Activated CD4-positive, alpha-beta memory T cell treated with anti-CD3 and anti-CD28 coated beads for 36 hours (primary cell): ENCODE measurements at regions of chr5 and their contacts with region 1.

Region 1: DNA sequence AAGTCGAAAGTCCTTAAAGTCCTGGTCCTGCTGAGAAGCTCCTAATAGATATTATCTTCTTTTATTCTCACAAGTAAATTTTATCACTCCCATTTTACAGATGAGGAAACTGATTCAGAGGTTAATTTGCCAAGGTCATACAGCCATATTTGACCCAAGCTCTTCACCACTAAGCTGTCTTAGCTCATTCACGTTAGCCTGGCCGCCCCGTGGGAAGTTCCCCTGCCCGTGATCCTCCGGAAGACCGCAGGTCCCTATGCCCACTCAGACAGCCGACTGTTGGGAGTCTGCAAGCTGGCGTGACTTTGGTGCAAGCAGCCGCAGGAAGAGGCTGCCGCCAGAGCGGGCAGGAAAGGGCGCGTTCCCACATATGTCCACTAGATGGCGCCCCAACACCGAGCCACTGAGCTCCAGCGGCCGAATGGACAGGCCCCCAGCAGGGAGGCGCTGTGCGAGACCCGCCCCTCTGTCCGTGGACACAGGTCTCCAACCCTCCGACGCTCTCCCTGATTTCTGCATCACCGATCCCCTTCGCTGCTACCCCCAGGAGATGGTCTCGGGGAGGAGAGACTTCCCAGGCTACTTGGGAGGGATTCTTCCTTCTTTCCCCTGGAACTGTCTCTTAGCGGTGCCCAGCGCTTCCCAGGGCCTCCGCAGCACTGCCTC is 10.0 kb upstream of the ARAP3 start:
- DNase-seq: peak; percentile 93
- H3K4me3 Mint-ChIP-seq: peak overlapping the region; percentile 46
- H3K27ac Mint-ChIP-seq: no peak overlapping the region
- H3K4me1 Mint-ChIP-seq: peaks cover 25% of the 10 kb centered on the region
- H3K27me3 Mint-ChIP-seq: no peaks in the 10 kb centered on the region

Region 2: DNA sequence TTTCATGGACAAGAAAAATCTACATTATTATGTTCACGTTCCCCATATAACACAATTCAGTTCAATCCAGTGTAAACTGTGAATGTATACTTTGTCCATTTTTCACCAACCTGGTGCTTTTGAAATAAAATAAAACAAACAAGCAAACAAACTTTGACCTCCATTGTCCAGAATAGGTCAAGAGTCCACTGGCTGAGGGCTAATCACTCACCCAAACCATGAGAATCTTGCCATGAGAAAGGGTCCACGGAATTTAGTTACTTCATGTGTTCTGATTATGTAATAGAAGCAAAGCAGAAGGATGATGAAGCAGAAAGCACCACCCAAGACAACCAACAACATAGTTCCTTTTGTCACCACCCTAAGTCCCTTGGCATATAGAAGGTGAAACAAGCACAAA is 101.9 kb before region 1 on chr5:
- CTCF ChIA-PET with region 1: interaction called, 13 read pairs
- POLR2A ChIA-PET with region 1: no interaction called
- intact Hi-C with region 1: loop called (anchors 5 kb)
- DNase-seq: no peak
- H3K4me3 Mint-ChIP-seq: no peak overlapping the region
- H3K27ac Mint-ChIP-seq: no peak overlapping the region
- H3K4me1 Mint-ChIP-seq: peaks cover 39% of the 10 kb centered on the region
- H3K27me3 Mint-ChIP-seq: no peaks in the 10 kb centered on the region

Region 3: DNA sequence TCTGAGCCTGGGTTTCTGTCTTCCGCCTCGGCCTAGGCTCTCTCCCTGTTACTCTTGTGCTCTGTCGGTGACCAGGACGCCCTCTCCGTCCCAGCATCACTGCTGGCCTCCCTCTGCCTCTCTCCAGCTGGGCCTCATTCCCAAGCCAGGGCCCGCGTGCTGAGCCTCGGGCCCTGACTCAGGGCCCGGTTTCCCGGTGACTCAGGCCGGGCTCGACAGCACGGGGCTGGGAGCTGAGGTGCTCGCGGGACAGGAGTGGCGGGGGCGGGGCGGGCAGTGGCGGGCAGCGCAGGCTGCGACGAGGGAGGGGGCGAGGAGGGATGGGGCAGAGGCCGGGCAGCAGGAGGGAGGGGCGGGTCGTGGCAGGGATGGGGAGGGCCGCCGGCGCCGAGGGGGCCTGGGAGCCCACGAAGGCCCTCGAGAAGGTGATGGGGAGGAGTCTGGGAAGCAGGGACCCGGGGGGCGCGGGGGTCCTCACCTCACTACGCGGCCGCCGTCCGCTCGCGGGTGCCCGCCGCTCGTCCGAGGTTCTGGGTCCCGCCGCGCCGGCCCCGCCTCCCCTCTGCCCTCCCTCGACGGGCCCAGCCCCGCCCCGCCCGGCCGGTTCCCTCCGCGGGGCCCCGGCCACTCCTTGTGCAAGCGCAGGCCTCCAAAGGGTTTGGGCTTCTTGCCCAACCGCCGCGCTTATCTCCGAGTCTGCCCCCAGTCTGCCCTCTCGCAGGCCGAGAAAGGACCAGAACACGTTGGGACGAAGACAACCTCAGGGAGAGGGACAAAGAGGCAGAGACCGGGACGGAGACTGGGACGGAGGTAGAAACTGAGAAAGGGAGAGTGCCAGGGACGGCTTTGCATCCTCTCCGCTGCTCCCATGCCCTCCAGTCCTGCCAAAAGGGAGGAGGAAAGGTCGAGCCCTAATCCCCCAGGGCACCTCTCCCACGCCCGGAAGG is 10.0 kb before region 1 on chr5 and contains the start of gene ARAP3:
- CTCF ChIA-PET with region 1: interaction called, 47 read pairs
- POLR2A ChIA-PET with region 1: interaction called, 3 read pairs
- intact Hi-C with region 1: no loop called
- DNase-seq: peak; percentile 53
- H3K4me3 Mint-ChIP-seq: peak within 1 kb of the TSS; percentile 69
- H3K27ac Mint-ChIP-seq: peak within 1 kb of the TSS; percentile 68
- H3K4me1 Mint-ChIP-seq: peaks cover 19% of the 10 kb centered on the region
- H3K27me3 Mint-ChIP-seq: no peaks in the 10 kb centered on the region
- total RNA-seq, gene ARAP3: 5.1 to 5.2 TPM

Region 4: DNA sequence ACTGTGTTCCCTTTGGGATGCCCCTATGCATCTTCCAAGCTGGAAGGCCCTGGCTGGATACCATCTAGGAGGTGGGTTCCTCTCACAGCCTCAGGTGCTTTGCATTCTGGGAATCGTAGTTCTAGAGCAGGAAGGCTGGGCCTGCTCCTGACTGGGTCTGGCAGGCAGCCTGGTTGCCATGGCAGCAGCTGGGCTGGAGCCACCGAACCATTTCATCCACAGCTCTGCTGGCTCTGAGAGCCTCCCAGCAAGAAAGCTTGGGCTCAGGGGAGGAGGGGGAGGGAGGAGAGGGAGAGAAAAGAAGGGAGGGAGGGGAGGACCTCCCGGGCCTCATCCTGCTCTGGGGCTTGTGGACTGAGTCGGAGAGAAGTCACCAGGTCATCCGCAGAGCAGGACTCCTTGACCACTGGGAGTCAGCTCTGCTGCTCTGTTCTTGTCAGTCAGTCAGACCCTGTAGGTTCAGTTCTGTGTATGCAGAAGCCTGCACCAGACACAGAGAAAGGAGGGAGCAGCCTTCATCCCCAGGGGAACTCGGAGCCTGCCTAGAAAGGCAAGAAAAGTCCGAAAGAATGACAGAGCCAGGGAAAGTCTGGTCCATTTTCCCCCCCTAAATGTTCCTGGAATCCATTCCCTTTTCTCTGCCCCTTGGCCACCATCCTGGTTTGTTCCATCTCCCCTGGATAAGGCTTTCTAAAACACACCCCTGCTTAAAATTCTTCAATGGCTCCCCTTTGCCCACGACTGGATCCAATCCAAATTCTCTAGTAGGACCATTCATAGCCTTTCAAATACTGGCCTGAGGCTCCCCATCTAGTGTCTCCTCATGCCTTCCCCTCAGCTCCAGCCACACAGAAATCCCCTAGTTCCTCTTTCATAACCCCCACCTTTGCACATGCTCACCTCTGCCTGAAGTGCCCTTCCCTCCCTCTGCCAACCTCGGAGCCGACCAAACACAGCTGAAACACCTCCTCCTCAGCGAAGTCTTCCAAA is 55.4 kb after region 1 on chr5:
- CTCF ChIA-PET with region 1: no interaction called
- POLR2A ChIA-PET with region 1: no interaction called
- intact Hi-C with region 1: no loop called
- DNase-seq: no peak
- H3K4me3 Mint-ChIP-seq: no peak overlapping the region
- H3K27ac Mint-ChIP-seq: no peak overlapping the region
- H3K4me1 Mint-ChIP-seq: no peaks in the 10 kb centered on the region
- H3K27me3 Mint-ChIP-seq: peaks cover 25% of the 10 kb centered on the region

Region 5: DNA sequence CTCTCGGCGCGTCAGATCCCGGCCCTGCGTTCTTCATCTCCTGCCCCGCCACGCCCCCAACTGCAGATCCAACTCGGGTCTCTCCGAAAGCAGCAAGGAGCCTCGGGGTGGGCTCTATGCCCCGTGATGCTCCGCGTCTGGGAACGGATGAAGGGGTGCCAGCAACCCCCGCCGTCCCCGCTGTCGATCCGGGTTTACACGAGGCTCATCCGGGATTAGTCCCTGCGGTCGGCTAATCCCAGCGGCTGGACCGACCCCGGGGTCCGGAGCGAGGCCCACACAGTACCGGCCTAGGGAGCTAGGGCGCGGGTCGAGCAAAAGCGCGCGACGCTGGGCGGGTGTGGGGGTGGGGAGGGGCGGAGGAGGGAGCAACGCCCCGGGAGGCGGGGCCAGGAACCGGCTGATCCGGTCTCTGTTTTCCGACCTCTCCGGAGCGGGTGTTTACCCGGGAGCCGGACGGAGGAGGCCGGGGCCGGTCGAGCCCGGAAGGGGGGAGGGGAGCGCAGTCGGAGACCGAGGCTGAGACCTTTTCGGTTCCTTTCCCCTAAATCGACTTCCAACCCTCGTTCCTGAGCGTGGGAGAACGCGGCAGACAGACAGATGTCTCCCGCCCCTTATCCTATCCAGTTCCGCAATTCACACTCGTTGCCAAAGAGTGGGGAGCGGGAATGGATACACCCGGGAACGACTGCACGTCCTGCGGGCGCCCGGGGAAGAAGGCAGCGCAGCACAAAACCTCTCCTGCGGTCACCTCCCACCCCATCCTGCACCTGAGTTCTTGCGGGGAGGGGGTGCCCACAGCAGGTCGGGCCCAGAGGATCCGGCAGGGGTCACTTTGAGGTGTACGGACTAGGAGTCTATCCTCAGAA is 157.6 kb after region 1 on chr5:
- CTCF ChIA-PET with region 1: interaction called, 15 read pairs
- POLR2A ChIA-PET with region 1: no interaction called
- intact Hi-C with region 1: no loop called
- DNase-seq: peak; percentile 84
- H3K4me3 Mint-ChIP-seq: peak overlapping the region; percentile 81
- H3K27ac Mint-ChIP-seq: peak overlapping the region; percentile 85
- H3K4me1 Mint-ChIP-seq: peaks cover 16% of the 10 kb centered on the region
- H3K27me3 Mint-ChIP-seq: no peaks in the 10 kb centered on the region

Region 6: GRCh38 chr5:141923448-141924352 is 231.7 kb after region 1 on chr5 and contains the start of gene DELE1:
- CTCF ChIA-PET with region 1: interaction called, 22 read pairs
- POLR2A ChIA-PET with region 1: interaction called, 6 read pairs
- intact Hi-C with region 1: loop called (anchors 1 kb)
- DNase-seq: peak; percentile 96
- H3K4me3 Mint-ChIP-seq: peak within 1 kb of the TSS; percentile 80
- H3K27ac Mint-ChIP-seq: peak within 1 kb of the TSS; percentile 96
- H3K4me1 Mint-ChIP-seq: peaks cover 18% of the 10 kb centered on the region
- H3K27me3 Mint-ChIP-seq: no peaks in the 10 kb centered on the region
- total RNA-seq, gene DELE1: 49.3 to 51.5 TPM

Region 7: DNA sequence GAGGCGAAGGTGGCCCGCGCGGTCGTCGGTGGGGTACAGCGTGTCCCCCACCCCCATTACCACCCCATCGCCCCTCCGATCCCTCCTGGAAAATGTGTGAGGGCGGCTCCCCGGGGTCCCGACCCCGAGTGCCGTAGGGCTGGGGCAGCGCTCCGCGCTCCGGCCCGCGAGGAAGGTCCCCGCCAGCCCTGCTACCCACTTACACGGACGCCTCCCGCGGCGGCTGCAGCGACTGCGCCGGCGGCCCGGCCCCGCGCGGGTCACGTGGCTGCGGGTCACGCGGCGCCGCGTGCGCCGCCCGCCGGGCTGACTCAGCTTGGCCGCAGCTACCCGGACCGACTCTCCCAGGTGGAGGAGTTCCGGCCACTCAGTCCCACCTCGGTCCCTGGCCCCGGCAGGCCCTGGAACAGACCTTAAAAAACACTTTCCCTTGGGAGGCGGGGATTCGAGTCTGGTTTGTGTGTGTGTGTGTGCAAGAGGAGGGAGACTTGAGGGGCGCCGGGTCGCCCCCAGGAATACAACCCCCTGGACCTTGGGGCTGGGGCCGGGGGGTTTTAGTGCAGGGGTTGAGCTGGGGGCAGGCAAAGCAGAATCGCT is 320.9 kb after region 1 on chr5 and contains the start of gene GNPDA1:
- CTCF ChIA-PET with region 1: interaction called, 8 read pairs
- POLR2A ChIA-PET with region 1: no interaction called
- intact Hi-C with region 1: loop called (anchors 2 kb)
- DNase-seq: peak; percentile 81
- H3K4me3 Mint-ChIP-seq: peak within 1 kb of the TSS; percentile 89
- H3K27ac Mint-ChIP-seq: peak within 1 kb of the TSS; percentile 98
- H3K4me1 Mint-ChIP-seq: peaks cover 69% of the 10 kb centered on the region
- H3K27me3 Mint-ChIP-seq: no peaks in the 10 kb centered on the region
- total RNA-seq, gene GNPDA1: 55.8 to 56.6 TPM